Sigmoid colon (tissue), 7 donors: ENCODE measurements at regions of chr14 and their contacts with region 1.

Region 1: GRCh38 chr14:49633640-49634546 is 1.2 kb downstream of the DNAAF2 start:
- DNase-seq: peak; percentile 96
- H3K4me3 ChIP-seq: peak overlapping the region; percentile 66 to 95 (median 86)
- H3K27ac ChIP-seq: peak overlapping the region; percentile 91 to 99 (median 98)
- H3K4me1 ChIP-seq: peaks cover 0 to 53% (median 33%) of the 10 kb centered on the region in 4 donors
- H3K27me3 ChIP-seq: no peaks in the 10 kb centered on the region
- CTCF ChIP-seq: peak; percentile 62 to 80 (median 78)
- EP300 ChIP-seq: no peak
- POLR2A ChIP-seq: peak; percentile 14 to 36

Region 2: GRCh38 chr14:49620182-49621113 is 13.4 kb before region 1 on chr14 and contains the starts of genes MGAT2 and RPL36AL:
- intact Hi-C with region 1: loop called (anchors 2 kb)
- DNase-seq: peak; percentile 99
- H3K4me3 ChIP-seq: peak within 1 kb of the TSS; percentile 73 to 95 (median 82)
- H3K27ac ChIP-seq: peak within 1 kb of the TSS; percentile 90 to 97 (median 92)
- H3K4me1 ChIP-seq: peaks cover 0 to 44% (median 35%) of the 10 kb centered on the region in 4 donors
- H3K27me3 ChIP-seq: no peaks in the 10 kb centered on the region
- CTCF ChIP-seq: peak in 3 of 4 experiments; percentile 11 to 25 (median 14)
- EP300 ChIP-seq: peak in 1 of 4 donors; percentile 27
- POLR2A ChIP-seq: peak; percentile 95 to 98
- total RNA-seq, gene MGAT2: 17.7 to 18.8 (median 17.9) TPM
- total RNA-seq, gene RPL36AL: 183 to 446 (median 295) TPM

Region 3: DNA sequence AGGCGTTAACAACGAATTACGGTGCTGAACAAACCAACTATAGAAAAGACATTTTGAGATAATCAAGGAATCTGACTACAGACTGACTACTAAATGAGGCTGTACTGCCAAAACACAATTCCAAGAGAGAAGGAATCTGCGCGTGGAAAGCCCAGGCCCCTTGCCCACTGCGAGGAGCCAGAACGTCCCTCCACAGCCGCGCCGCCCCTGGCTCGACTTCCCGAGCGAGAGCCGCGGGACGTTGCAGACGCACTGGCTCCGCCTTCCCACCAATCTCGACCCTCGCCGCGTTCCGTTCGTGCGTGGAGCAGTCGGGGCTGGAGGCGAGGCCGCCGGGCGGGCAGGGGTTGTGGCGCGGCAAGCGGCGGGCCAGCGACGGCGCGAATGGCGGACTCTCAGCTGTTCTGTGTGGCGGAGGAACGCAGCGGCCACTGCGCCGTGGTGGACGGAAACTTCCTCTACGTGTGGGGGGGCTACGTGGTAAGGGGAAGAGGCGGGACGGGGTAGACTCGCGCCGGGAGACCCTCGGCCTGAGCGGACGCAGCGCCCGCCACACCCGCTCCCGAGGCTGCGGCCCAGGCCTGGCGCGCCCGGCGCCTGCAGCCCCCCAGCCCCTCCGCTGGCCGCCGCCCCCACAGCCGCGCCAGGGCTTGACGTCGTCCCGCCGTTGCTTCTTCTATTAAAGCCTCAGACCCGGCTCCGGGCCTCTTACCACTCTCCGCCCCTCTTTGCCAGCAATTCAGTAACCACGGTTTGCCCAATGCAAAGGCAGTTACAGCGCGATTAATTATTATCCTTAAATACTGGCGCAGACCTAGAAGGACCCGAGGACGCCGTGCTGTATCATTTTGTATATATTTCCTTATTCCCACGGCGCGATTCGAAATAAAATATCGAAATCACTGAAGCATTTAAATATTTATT is 59.2 kb after region 1 on chr14 and contains the start of gene KLHDC1:
- intact Hi-C with region 1: loop called (anchors 2 kb)
- DNase-seq: peak; percentile 95
- H3K4me3 ChIP-seq: peak within 1 kb of the TSS; percentile 56 to 81 (median 66)
- H3K27ac ChIP-seq: peak within 1 kb of the TSS; percentile 91 to 99 (median 96)
- H3K4me1 ChIP-seq: peaks cover 0 to 21% (median 16%) of the 10 kb centered on the region in 4 donors
- H3K27me3 ChIP-seq: no peaks in the 10 kb centered on the region
- CTCF ChIP-seq: no peak
- EP300 ChIP-seq: no peak
- POLR2A ChIP-seq: peak; percentile 94 to 96
- total RNA-seq, gene KLHDC1: 11.4 to 19.1 (median 13.6) TPM

Region 4: DNA sequence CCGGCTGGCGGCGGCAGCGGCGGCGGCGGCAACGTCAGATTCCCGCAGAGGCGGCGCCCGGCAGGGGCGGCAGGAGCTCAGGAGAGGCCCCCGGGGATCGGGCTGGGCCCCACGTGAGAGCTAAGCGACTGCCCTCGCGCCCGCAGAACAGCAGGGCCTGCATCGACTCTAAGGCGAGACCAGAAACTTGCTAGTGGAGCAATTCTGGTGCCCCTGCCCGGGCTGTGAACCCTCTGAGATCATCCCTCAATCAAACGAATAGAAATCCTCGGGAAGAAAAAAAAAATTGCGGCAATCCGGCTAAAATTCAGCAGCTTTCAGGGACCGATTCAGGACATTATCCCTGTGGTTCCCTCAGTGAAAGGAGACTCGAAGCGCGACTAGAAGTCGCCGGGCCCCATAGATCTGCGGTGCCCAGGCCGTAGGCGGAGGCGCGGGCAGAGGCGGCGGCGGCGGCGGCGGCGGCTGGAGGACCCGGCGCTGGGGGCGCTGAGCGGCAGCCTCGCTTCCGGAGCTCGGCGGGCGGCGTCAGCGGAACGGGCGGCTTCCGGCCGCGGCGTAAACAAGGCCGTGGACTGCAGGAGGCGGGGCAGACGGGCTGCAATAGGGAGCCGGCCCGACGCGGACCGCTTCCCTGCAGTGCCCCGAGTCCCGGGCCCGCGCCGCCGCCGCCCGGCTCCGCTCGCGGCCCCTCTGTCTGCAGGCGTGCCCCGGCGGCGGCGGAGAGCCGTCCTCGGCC is 133.8 kb after region 1 on chr14 and contains the start of gene KLHDC2:
- intact Hi-C with region 1: loop called (anchors 2 kb)
- DNase-seq: peak; percentile 93
- H3K4me3 ChIP-seq: peak within 1 kb of the TSS; percentile 75 to 100 (median 87)
- H3K27ac ChIP-seq: peak within 1 kb of the TSS; percentile 93 to 99 (median 98)
- H3K4me1 ChIP-seq: peaks cover 0 to 30% (median 28%) of the 10 kb centered on the region in 4 donors
- H3K27me3 ChIP-seq: no peaks in the 10 kb centered on the region
- CTCF ChIP-seq: peak in 1 of 4 experiments; percentile 18
- EP300 ChIP-seq: no peak
- POLR2A ChIP-seq: no peak
- total RNA-seq, gene KLHDC2: 80.9 to 111 (median 96.4) TPM

Region 5: DNA sequence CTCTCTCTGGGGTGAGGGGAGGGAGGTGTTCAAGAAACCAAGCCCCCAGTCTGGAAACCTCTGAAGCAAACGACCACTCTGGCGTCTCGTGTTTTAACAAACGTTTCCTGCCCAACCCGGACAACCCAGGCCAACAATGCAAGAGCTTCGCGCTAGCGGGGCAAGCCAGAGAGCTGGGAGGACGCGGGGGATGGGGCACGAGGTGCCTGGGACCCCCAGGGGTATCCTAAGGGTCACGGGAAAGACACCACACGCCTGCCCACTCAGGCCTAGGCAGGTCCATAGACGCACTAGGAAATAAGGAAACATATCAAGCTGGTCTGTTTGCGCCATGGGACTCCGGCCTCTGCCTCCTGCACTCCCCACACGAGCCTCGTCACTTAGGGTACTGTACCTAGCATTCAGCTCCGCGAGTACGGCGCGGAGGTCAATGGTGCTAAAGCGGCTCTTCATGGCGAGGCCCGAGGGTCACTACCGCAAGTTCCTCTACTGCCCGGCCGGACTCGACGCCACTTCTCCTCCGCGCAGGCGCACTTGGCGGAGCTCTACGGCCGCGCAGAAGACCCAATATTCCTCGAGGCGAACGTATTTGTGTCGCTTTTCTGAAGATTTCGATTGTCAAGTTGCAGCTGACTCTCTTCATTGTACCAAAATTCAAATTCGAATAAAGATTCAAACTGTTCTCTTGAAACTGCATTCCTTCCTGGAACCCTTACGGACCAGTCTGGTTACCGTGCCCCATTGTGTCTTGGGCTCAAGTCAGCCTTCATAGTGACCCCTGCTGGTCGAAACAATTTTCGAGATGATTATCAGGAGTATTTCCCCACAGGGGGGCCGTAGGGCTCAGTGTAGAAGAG is 218.6 kb after region 1 on chr14 and contains the start of gene NEMF:
- intact Hi-C with region 1: loop called (anchors 5 kb)
- DNase-seq: peak; percentile 92
- H3K4me3 ChIP-seq: peak within 1 kb of the TSS; percentile 60 to 78 (median 74)
- H3K27ac ChIP-seq: peak within 1 kb of the TSS; percentile 86 to 90 (median 88)
- H3K4me1 ChIP-seq: peaks cover 0 to 31% (median 21%) of the 10 kb centered on the region in 4 donors
- H3K27me3 ChIP-seq: no peaks in the 10 kb centered on the region
- CTCF ChIP-seq: peak; percentile 66 to 93 (median 80)
- EP300 ChIP-seq: no peak
- POLR2A ChIP-seq: peak; percentile 72 to 84
- total RNA-seq, gene NEMF: 73.7 to 121 (median 79.0) TPM

Region 6: GRCh38 chr14:50116181-50116956 is 482.5 kb after region 1 on chr14 and contains the start of gene VCPKMT:
- intact Hi-C with region 1: loop called (anchors 10 kb)
- DNase-seq: peak; percentile 97
- H3K4me3 ChIP-seq: peak within 1 kb of the TSS; percentile 55 to 86 (median 78)
- H3K27ac ChIP-seq: peak within 1 kb of the TSS; percentile 81 to 92 (median 88)
- H3K4me1 ChIP-seq: peaks cover 0 to 24% (median 17%) of the 10 kb centered on the region in 4 donors
- H3K27me3 ChIP-seq: no peaks in the 10 kb centered on the region
- CTCF ChIP-seq: no peak
- EP300 ChIP-seq: peak in 1 of 4 donors; percentile 48
- POLR2A ChIP-seq: peak; percentile 77 to 79
- total RNA-seq, gene VCPKMT: 7.8 to 12.2 (median 9.4) TPM